ENCODE measurements at regions of chr20 and their contacts with region 1.

Region 1: DNA sequence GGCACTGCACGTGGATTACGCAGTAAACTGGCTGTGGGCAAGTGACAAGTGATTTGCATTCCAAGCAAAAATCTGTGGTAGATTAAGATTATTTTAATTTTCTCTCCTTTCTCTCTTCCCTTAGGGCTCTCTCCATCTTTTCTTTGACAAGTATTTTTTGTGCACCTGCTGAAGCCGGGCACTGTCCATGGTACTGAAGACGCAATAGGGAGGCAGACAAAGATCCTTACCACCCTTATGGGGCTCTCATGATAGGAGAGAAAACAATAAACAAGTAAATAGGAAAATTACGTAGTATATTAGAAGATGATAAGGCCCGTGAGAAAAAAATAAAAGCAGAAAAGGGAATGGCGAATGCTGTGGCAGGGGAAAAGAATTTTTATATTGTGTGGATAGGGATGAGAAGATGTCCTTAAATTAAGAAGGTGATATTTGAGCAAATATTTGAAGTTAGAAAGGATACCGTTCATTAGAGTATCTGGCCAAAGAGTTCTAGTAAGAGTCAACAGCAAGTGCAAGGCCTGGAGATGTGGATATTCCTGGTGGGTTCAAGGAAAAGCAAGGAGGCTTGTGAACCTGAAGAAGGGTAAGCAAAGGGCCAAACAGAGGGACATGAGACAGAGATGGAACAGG is 146.0 kb downstream of the LAMP5 start:
- DNase-seq: no peak
- ATAC-seq: no peak
- H3K4me3 ChIP-seq: no peak overlapping the region
- H3K27ac ChIP-seq: no peak overlapping the region
- H3K4me1 ChIP-seq: no peaks in the 10 kb centered on the region
- H3K27me3 ChIP-seq: peaks cover 0 to 9% (median 0%) of the 10 kb centered on the region in 9 donors
- CTCF ChIP-seq: no peak
- POLR2A ChIP-seq: no peak

Region 2: GRCh38 chr20:9884061-9884460 is 223.7 kb after region 1 on chr20:
- intact Hi-C with region 1: loop called in 1 of 10 experiments (anchors 10 kb)
- DNase-seq: no peak
- ATAC-seq: no peak
- H3K4me3 ChIP-seq: no peak overlapping the region
- H3K27ac ChIP-seq: no peak overlapping the region
- H3K4me1 ChIP-seq: no peaks in the 10 kb centered on the region
- H3K27me3 ChIP-seq: no peaks in the 10 kb centered on the region
- CTCF ChIP-seq: no peak
- POLR2A ChIP-seq: no peak

Measured in heart left ventricle (tissue), 16 donors.